Activated CD4-positive, alpha-beta T cell treated with anti-CD3 and anti-CD28 coated beads for 36 hours (primary cell): ENCODE measurements at regions of chr12 and their contacts with region 1.

Region 1: GRCh38 chr12:65169320-65170208 is at the start of gene LEMD3:
- DNase-seq: peak; percentile 97
- ATAC-seq: peak; percentile 94
- H3K4me3 Mint-ChIP-seq: peak within 1 kb of the TSS; percentile 92
- H3K27ac Mint-ChIP-seq: peak within 1 kb of the TSS; percentile 97
- H3K4me1 Mint-ChIP-seq: peaks cover 30% of the 10 kb centered on the region
- H3K27me3 Mint-ChIP-seq: peaks cover 3% of the 10 kb centered on the region
- total RNA-seq, gene LEMD3: 15.9 to 17.6 TPM

Region 2: GRCh38 chr12:64679487-64679983 is 490.0 kb before region 1 on chr12:
- CTCF ChIA-PET with region 1: no interaction called
- POLR2A ChIA-PET with region 1: no interaction called
- intact Hi-C with region 1: loop called in 1 of 2 experiments (anchors 10 kb)
- DNase-seq: peak; percentile 79
- ATAC-seq: peak; percentile 59
- H3K4me3 Mint-ChIP-seq: peak overlapping the region; percentile 53
- H3K27ac Mint-ChIP-seq: peak overlapping the region; percentile 91
- H3K4me1 Mint-ChIP-seq: peaks cover 96% of the 10 kb centered on the region
- H3K27me3 Mint-ChIP-seq: no peaks in the 10 kb centered on the region

Region 3: DNA sequence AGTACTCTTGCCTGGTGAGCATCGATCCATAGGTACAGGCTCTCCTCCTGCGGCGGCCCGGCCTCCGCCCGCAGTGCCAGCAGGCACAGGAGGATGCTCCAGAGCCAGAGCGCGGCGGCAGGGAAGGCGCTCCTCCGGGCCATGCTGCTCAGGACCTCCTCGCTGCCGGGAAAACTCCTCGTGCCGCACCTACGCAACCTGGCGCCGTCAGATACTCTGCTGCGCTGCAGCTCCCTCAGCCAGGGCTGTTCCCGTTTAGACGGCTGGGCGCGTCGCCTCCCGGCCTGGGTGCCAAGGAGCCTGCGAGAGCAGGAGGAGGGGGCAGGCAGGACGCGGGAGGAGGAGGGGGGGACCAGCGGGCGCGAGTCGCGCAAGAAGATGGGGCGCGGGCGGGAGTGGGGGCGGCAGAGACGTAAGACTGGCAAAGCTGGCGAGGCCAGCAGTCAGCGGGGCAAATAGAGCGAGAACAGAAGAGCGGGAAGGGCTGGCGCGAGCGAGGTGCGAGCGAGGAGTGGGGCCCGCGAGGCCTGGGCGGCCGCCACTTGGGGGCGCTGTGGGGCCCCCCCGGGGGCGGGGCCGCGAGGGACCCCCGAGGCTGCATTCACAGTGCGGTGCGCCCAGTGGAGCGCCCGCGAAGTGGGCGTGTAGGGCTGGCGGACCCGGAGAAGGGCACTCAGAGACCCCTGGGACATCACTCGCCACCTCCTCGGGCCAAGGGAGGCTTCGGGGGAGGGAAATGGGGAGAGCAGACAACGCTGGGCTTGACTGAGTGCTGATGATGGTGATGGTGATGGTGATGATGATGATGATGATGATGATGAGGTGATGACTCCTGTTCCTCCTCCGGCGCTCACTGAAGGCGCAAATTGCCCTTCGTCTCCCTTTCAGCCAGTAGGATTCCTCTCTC is 48.3 kb before region 1 on chr12 and contains the start of gene WIF1:
- CTCF ChIA-PET with region 1: no interaction called
- POLR2A ChIA-PET with region 1: no interaction called
- intact Hi-C with region 1: loop called in 1 of 2 experiments (anchors 5 kb)
- DNase-seq: peak; percentile 56
- ATAC-seq: peak; percentile 82
- H3K4me3 Mint-ChIP-seq: peak within 1 kb of the TSS; percentile 32
- H3K27ac Mint-ChIP-seq: no peak within 1 kb of the TSS
- H3K4me1 Mint-ChIP-seq: peaks cover 6% of the 10 kb centered on the region
- H3K27me3 Mint-ChIP-seq: peaks cover 31% of the 10 kb centered on the region
- total RNA-seq, gene WIF1: not detected

Region 4: DNA sequence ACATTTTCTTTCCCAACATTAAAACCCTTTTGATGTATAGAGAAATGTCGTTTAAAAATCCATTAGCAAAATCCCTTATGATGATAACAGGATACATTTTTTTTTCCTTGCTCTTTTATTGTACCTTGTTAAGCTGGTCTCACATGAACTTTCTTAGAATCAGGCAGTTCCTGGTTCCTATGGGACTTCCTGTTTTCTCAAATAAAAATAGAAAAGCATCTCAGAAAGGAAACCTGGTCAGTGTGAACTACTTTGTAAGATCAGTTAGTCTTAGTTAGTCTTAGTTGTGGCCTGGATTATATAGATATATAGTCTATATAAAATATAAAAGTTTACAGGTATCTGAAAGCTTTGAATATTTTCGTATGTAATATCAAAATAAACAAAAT is 40.1 kb after region 1 on chr12:
- CTCF ChIA-PET with region 1: no interaction called
- POLR2A ChIA-PET with region 1: no interaction called
- intact Hi-C with region 1: loop called (anchors 2 to 5 kb)
- DNase-seq: no peak
- ATAC-seq: no peak
- H3K4me3 Mint-ChIP-seq: peak overlapping the region; percentile 47
- H3K27ac Mint-ChIP-seq: peak overlapping the region; percentile 88
- H3K4me1 Mint-ChIP-seq: peaks cover 50% of the 10 kb centered on the region
- H3K27me3 Mint-ChIP-seq: no peaks in the 10 kb centered on the region

Region 5: GRCh38 chr12:65248656-65249633 is 79.4 kb after region 1 on chr12:
- CTCF ChIA-PET with region 1: interaction called, 3 read pairs
- POLR2A ChIA-PET with region 1: no interaction called
- intact Hi-C with region 1: loop called in 1 of 2 experiments (anchors 1 kb)
- DNase-seq: peak; percentile 18
- ATAC-seq: peak; percentile 85
- H3K4me3 Mint-ChIP-seq: no peak overlapping the region
- H3K27ac Mint-ChIP-seq: peak overlapping the region; percentile 72
- H3K4me1 Mint-ChIP-seq: peaks cover 16% of the 10 kb centered on the region
- H3K27me3 Mint-ChIP-seq: no peaks in the 10 kb centered on the region

Region 6: GRCh38 chr12:65282840-65283239 is 113.3 kb after region 1 on chr12:
- CTCF ChIA-PET with region 1: no interaction called
- POLR2A ChIA-PET with region 1: no interaction called
- intact Hi-C with region 1: no loop called
- DNase-seq: no peak
- ATAC-seq: no peak
- H3K4me3 Mint-ChIP-seq: no peak overlapping the region
- H3K27ac Mint-ChIP-seq: no peak overlapping the region
- H3K4me1 Mint-ChIP-seq: peaks cover 2% of the 10 kb centered on the region
- H3K27me3 Mint-ChIP-seq: peaks cover 32% of the 10 kb centered on the region

Region 7: GRCh38 chr12:66301944-66302826 is 1132.6 kb after region 1 on chr12 and contains the start of gene HELB:
- CTCF ChIA-PET with region 1: no interaction called
- POLR2A ChIA-PET with region 1: no interaction called
- intact Hi-C with region 1: loop called in 1 of 2 experiments (anchors 1 kb)
- DNase-seq: peak; percentile 99
- ATAC-seq: peak; percentile 83
- H3K4me3 Mint-ChIP-seq: peak within 1 kb of the TSS; percentile 96
- H3K27ac Mint-ChIP-seq: peak within 1 kb of the TSS; percentile 100
- H3K4me1 Mint-ChIP-seq: peaks cover 39% of the 10 kb centered on the region
- H3K27me3 Mint-ChIP-seq: no peaks in the 10 kb centered on the region
- total RNA-seq, gene HELB: 21.0 to 23.6 TPM